Right cardiac atrium (tissue), 5 donors: ENCODE measurements at regions of chr17 and their contacts with region 1.

Region 1: DNA sequence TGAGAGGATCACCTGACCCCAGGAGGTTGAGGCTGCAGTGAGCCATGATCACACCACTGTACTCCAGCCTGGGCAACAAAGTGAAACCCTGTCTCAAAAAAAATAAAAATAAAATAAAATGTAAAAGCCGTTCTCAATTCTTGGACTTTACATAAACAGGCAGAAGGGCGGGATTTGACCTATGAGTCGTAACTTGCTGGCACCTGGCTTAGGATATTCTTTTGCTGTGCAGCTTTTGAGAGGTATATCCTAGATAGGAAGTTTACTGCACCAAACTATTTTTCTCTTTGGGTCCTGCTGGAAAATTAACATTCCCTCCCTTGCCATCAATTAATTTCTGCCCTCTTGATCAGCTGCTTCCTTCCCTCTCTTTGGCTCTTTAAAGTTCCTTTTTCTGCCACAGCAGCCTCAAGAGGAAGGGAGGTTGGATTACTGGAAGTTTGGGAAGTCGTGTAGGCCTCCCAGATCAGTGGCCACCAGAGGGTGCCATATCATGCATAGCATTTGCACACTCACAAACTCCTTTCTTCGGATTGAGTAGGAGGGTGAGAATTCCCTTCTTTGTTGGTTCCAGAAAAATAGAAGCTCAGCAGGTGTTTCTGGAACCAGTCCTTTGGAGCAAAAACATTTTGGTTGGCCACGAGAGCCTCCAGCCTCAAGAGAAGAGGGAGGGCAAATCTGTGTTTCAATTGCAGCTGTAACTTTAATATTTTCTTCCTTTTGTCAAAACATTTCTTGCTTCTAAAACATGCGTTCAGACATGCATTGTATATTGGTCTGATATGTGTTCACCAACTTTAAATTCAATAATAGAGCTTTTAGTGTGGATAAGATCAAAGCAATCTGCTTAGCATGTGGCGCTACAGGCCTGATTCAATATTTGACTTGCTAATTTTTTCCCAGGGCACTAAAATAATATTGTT is 147.3 kb downstream of the CCDC182 start:
- DNase-seq: peak; percentile 74 to 90 (median 84)
- ATAC-seq: peak; percentile 64 to 71
- H3K4me3 ChIP-seq: no peak overlapping the region
- H3K27ac ChIP-seq: no peak overlapping the region
- H3K4me1 ChIP-seq: peaks cover 11% of the 10 kb centered on the region
- H3K27me3 ChIP-seq: no peaks in the 10 kb centered on the region

Region 2: GRCh38 chr17:57662644-57663308 is 65.0 kb after region 1 on chr17:
- intact Hi-C with region 1: loop called in 2 of 4 experiments (anchors 2 to 5 kb)
- DNase-seq: peak; percentile 99
- ATAC-seq: peak; percentile 98 to 99
- H3K4me3 ChIP-seq: peak overlapping the region; percentile 16
- H3K27ac ChIP-seq: peak overlapping the region; percentile 97
- H3K4me1 ChIP-seq: peaks cover 2% of the 10 kb centered on the region
- H3K27me3 ChIP-seq: no peaks in the 10 kb centered on the region

Region 3: DNA sequence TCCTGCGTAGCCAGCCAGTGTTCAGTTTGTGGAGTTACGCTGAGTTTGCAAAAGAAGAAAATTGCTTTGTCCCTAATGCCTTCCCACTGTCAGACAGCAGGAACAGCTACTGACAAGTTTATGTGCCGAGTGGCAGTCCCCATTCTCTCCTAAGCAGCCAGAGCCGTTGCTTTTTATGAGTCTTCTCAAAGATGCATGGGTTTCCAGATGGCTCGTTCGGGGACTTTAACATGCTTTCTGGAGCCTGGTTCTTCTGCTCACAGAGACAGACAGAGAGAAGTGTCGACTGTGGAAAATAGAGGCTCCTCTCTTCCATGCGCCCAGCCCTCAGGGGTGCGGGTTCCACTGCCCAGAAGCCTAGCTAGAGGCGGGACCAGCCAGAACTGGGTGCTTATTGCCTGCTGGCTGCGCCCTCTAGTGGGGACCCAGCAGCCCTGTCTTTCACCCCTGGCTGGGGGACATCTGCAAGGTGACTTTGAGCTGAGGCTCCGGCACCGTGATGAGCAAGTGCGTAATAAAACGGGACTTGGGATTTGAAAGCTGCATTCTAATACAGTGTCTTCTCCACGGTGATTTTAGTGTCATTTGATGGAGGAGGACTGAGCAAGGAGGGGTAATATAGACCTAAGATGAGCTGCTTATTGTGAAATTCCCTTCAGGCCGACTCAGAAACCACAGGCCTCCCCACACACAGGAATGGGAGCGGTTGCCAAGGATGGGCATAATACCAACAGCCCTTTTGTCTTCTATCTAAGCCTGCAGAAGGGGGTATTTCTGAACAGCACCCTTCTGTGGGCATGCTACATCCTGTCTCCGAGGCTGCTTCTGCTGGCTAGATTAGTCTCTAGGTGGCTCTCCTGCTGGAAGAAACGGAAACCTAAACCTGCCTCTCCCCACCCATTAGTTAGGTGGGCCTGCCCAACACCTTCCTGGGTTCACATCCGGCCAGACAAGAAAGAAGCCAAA is 74.2 kb after region 1 on chr17:
- intact Hi-C with region 1: loop called in 2 of 4 experiments (anchors 5 kb)
- DNase-seq: peak; percentile 82 to 92 (median 91)
- ATAC-seq: peak; percentile 92 to 94
- H3K4me3 ChIP-seq: no peak overlapping the region
- H3K27ac ChIP-seq: no peak overlapping the region
- H3K4me1 ChIP-seq: no peaks in the 10 kb centered on the region
- H3K27me3 ChIP-seq: no peaks in the 10 kb centered on the region

Region 4: DNA sequence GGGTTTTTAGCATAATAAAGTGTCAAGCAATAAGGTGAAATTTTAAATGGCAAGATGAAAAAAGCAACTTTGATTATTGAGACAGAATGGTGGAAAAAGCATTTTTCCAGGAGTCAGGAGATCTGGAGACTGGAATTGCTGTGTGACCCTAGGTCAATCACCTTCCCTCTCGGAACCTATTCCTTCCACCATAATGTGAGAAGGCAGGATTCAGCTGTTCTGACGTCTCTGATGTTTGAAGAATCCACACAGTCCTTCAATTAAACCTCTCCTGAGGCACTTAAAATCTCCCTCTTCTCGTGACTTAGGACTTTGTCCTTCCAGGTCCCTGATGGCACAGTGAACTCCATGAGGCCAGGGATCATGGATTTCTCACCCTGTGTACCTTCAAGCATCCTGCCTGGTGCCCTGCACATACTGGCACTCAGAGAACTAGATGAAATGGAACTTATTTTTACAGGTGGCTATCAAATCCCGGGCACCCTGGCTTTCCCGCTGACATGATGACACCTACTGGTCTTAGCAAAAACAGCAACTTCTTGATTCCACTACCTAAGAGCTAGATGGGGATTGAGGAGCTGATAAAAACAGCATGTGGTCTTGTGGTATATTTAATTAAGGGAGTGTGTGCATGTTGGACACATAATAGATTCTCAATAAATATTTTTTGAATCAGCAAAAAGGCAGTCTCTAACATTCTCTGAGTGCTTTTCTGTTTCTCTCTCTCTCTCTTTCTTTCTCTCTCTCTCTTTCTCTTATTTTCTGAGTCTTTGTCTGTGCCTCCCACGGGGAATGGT is 149.6 kb after region 1 on chr17:
- intact Hi-C with region 1: loop called in 1 of 4 experiments (anchors 10 kb)
- DNase-seq: no peak
- ATAC-seq: peak; percentile 36 to 52
- H3K4me3 ChIP-seq: no peak overlapping the region
- H3K27ac ChIP-seq: no peak overlapping the region
- H3K4me1 ChIP-seq: no peaks in the 10 kb centered on the region
- H3K27me3 ChIP-seq: no peaks in the 10 kb centered on the region

Region 5: GRCh38 chr17:57833179-57833939 is 235.6 kb after region 1 on chr17:
- intact Hi-C with region 1: loop called in 1 of 4 experiments (anchors 10 kb)
- DNase-seq: peak; percentile 65 to 81 (median 74)
- ATAC-seq: peak; percentile 86 to 93
- H3K4me3 ChIP-seq: peak overlapping the region; percentile 48
- H3K27ac ChIP-seq: peak overlapping the region; percentile 94
- H3K4me1 ChIP-seq: peaks cover 8% of the 10 kb centered on the region
- H3K27me3 ChIP-seq: no peaks in the 10 kb centered on the region